PC-3 (cell line): ENCODE measurements at regions of chr1 and their contacts with region 1.

Region 1: GRCh38 chr1:109643385-109644230 is 12.3 kb upstream of the GSTM4 start:
- DNase-seq: peak; percentile 86
- ATAC-seq: peak; percentile 97
- H3K4me3 ChIP-seq: peak overlapping the region; percentile 55; the same call in 1 of the 2 replicates
- H3K27ac ChIP-seq: no peak overlapping the region
- H3K4me1 ChIP-seq: peaks cover 5% of the 10 kb centered on the region; the same call in 1 of the 2 replicates
- H3K27me3 ChIP-seq: no peaks in the 10 kb centered on the region
- CTCF ChIP-seq: peak; percentile 92

Region 2: DNA sequence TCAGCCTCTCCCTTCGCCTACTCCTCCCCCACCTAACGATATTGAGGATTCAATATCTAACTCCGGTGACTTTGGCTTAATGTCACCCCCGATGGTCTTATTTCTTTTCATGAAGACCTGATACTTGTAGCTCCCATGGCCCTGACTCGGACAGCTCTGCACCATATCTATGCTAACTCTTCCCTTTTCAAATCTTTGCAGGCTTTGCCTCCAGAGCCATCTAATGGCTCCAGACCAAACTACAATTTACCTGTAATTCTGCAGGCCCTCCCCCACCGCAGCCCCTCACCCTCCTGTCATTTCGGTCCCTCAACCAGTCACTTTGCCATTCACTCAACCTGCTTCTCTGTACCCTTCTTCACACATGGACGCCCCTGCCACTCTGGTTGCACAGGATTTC is 60.6 kb after region 1 on chr1:
- CTCF ChIA-PET with region 1: interaction called, 3 read pairs
- POLR2A ChIA-PET with region 1: no interaction called
- intact Hi-C with region 1: loop called (anchors 2 kb)
- DNase-seq: no peak
- ATAC-seq: no peak
- H3K4me3 ChIP-seq: no peak overlapping the region
- H3K27ac ChIP-seq: no peak overlapping the region
- H3K4me1 ChIP-seq: peaks cover 6% of the 10 kb centered on the region; the same call in 1 of the 2 replicates
- H3K27me3 ChIP-seq: no peaks in the 10 kb centered on the region
- CTCF ChIP-seq: no peak; the same call in 1 of the 2 replicates